Panc1 (cell line): ENCODE measurements at regions of chr7 and their contacts with region 1.

Region 1: DNA sequence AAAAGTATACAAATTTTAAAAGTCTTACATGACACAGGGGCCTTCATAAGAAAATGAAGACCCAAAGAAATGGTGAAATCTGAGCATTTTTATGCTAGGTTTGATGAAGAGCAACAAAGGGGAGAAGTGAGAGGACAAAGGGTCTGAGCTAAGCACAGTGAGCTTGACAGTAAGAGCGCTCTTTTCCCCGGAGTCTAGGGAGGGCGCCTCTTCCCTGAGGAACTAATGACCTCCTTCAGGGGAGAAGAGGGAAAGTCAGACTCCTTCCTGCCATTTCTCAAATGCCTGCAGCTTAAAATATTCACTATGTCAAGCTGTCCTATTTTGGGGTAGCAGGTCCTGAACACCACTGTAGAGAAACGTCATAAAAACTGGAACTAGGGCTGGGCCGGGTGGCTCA is 18.1 kb upstream of the PAXIP1 start:
- DNase-seq: no peak
- ATAC-seq: no peak
- H3K4me3 ChIP-seq: no peak overlapping the region
- H3K27ac ChIP-seq: no peak overlapping the region
- H3K4me1 ChIP-seq: no peaks in the 10 kb centered on the region
- H3K27me3 ChIP-seq: no peaks in the 10 kb centered on the region
- CTCF ChIP-seq: no peak; the same call in 1 of the 2 replicates

Region 2: GRCh38 chr7:155043756-155044155 is 22.8 kb after region 1 on chr7:
- CTCF ChIA-PET with region 1: interaction called, 10 read pairs
- POLR2A ChIA-PET with region 1: no interaction called
- in situ Hi-C with region 1: no loop called
- intact Hi-C with region 1: no loop called
- DNase-seq: no peak
- ATAC-seq: no peak
- H3K4me3 ChIP-seq: no peak overlapping the region
- H3K27ac ChIP-seq: no peak overlapping the region
- H3K4me1 ChIP-seq: no peaks in the 10 kb centered on the region
- H3K27me3 ChIP-seq: no peaks in the 10 kb centered on the region
- CTCF ChIP-seq: no peak